Dorsolateral prefrontal cortex (tissue), 120 donors: ENCODE measurements at regions of chr3 and their contacts with region 1.

Region 1: DNA sequence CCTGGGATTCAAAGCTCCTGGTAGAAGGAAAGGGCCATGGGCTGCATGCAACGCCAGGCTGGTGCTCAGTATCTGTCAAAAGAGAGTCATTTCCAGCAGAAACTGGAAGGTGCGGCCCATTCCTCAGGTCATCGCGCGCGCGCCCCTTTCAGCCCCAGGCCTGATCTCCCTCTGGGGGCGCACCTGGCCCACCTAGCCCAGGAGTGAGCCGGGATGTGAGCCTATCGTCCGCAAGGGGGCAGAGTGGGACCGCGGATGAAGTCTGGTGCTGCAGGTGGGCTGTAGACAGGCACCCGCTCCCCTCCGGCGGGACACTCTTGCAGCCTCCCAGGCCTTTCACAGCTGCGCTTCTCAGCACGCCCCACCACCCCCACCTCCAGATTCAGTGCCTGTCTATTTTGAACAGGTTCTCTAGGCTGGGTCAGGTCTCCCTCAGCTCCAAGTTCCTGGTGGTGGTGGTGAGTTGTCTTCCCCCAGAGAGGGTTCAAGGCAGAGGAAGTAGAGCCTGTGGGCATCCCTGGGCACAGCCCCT is 5.8 kb upstream of the RPL29 start:
- DNase-seq: peak; percentile 73 to 90 (median 80)
- H3K4me3 ChIP-seq: peak overlapping the region in 3 of 59 donors; percentile 3 to 12 (median 7)
- H3K27ac ChIP-seq: peak overlapping the region in 17 of 59 donors; percentile 1 to 72 (median 41)
- H3K27me3 ChIP-seq: no peaks in the 10 kb centered on the region
- CTCF ChIP-seq: peak; percentile 68 to 99 (median 96)

Region 2: DNA sequence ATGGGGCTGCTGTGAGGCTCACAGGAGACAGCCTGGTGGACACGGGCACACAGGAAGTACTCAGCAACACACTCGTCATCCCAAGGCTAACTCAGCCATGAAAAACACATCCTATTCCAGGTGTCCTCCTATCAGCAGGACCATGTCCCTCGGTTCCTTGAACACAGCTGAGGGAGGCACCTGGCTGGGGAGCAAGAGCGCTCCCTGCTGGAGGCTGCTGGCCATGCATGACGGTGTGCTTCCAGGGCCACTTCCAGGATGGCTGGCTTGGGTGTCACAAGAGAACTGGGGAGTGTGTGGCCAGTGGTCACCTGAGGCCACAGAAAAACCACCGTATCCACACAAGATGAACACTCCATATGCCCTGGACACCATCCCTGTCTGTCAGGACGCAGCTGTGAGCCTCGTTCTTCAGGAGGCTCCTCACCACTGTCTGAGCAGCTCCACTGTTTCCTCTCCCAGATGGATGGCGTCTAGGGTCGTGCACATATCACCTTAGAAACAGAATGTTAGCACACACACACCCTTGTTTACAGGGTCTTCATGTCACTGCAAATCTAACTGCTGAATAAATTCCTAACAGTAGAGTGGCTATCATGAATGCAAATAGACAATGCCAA is 121.7 kb after region 1 on chr3:
- intact Hi-C with region 1: loop called (anchors 1 to 2 kb)
- DNase-seq: peak; percentile 74 to 88 (median 82)
- H3K4me3 ChIP-seq: no peak overlapping the region
- H3K27ac ChIP-seq: peak overlapping the region in 50 of 59 donors; percentile 6 to 98 (median 66)
- H3K27me3 ChIP-seq: no peaks in the 10 kb centered on the region
- CTCF ChIP-seq: peak; percentile 82 to 99 (median 96)

Region 3: DNA sequence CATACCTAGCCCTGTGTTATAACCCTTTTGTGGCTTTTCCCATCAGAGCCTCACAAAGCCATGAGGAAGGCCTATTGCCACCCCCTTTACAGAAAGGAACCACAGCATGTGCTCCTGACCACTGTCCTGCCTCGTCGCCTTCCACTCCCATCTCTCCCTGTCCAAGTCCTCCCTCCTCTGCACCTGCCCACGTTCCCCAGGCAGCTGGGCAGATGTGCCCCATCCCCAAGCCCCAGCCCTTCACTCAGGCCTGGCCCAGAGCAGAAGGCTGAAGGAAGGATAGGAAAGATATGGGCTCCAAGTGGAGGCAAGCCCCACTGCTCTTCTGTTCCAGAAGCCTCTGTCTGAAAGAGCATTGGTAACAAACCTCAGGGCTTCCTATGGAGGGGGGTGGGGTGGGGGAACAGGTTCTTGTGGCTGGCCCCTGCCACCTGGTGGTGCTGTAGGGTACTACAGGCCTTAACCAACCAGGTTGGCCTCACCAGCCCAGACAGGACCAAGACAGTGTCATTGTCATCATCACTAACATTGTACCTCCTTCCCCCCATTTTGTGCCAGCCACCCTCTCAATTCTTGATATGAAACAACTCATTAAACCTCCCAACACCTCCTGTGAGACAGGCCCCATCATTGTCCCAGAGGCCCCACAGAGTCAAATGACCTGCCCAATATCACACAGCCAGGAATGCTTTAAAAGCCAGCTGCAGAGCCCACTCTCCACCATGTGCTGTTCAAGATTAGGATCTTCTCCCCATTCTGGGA is 142.7 kb after region 1 on chr3:
- intact Hi-C with region 1: loop called (anchors 1 kb)
- DNase-seq: peak; percentile 82 to 93 (median 86)
- H3K4me3 ChIP-seq: no peak overlapping the region
- H3K27ac ChIP-seq: peak overlapping the region in 37 of 59 donors; percentile 7 to 91 (median 60)
- H3K27me3 ChIP-seq: no peaks in the 10 kb centered on the region
- CTCF ChIP-seq: peak; percentile 90 to 100 (median 99)